Endothelial cell of umbilical vein (primary cell): ENCODE measurements at regions of chr10 and their contacts with region 1.

Region 1: DNA sequence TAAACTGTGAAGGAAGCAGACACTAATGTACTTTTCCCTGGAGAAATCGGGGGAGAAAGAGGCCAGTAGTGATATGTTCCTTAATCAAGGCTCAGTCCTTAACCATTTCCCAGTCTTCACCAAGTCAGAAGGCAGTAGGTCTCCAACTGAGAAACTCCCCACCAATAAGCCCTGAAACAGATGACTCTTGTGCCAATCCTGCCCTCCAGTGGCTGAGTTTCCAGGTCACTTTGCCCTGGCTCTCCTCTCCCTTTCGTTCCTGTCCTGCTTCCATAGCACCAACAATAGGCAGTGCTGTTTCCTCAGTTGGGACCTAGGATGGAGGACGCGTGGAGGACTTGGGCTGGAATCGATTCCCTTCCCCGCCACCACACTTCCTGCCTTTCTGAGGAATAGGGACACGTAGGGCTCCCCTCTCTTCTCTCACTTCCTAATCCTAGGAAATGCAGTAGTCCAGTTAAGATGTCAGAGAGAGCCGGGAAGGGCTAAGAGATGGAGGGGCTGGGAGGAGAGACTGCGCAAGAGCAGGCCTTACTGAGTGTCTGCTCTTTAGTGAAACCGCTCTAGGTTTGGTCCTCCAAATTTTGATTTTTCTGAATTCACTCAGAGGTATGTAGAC is 23.4 kb downstream of the ATOH7 start:
- DNase-seq: peak; percentile 82
- H3K4me3 ChIP-seq: no peak overlapping the region
- H3K27ac ChIP-seq: no peak overlapping the region
- H3K4me1 ChIP-seq: no peaks in the 10 kb centered on the region
- H3K27me3 ChIP-seq: peaks cover 5 to 10% of the 10 kb centered on the region in 2 experiments
- CTCF ChIP-seq: peak; percentile 70 to 75
- POLR2A ChIP-seq: no peak

Region 2: GRCh38 chr10:67849331-67850011 is 359.1 kb before region 1 on chr10:
- CTCF ChIA-PET with region 1: interaction called, 32 read pairs
- POLR2A ChIA-PET with region 1: no interaction called
- dilution Hi-C with region 1: no loop called
- intact Hi-C with region 1: no loop called
- DNase-seq: peak; percentile 92
- H3K4me3 ChIP-seq: peak overlapping the region; percentile 66 to 88 (median 74)
- H3K27ac ChIP-seq: peak overlapping the region; percentile 74
- H3K4me1 ChIP-seq: peaks cover 3% of the 10 kb centered on the region
- H3K27me3 ChIP-seq: no peaks in the 10 kb centered on the region
- CTCF ChIP-seq: no peak
- POLR2A ChIP-seq: peak; percentile 61

Region 3: GRCh38 chr10:68156373-68157185 is 52.0 kb before region 1 on chr10:
- CTCF ChIA-PET with region 1: interaction called, 25 read pairs
- POLR2A ChIA-PET with region 1: no interaction called
- dilution Hi-C with region 1: no loop called
- intact Hi-C with region 1: loop called (anchors 1 kb)
- DNase-seq: peak; percentile 74
- H3K4me3 ChIP-seq: no peak overlapping the region
- H3K27ac ChIP-seq: no peak overlapping the region
- H3K4me1 ChIP-seq: peaks cover 14% of the 10 kb centered on the region
- H3K27me3 ChIP-seq: no peaks in the 10 kb centered on the region
- CTCF ChIP-seq: peak; percentile 66 to 71
- POLR2A ChIP-seq: no peak

Region 4: GRCh38 chr10:68223535-68224165 is 15.1 kb after region 1 on chr10:
- CTCF ChIA-PET with region 1: interaction called, 38 read pairs
- POLR2A ChIA-PET with region 1: no interaction called
- dilution Hi-C with region 1: no loop called
- intact Hi-C with region 1: no loop called
- DNase-seq: no peak
- H3K4me3 ChIP-seq: no peak overlapping the region
- H3K27ac ChIP-seq: no peak overlapping the region
- H3K4me1 ChIP-seq: no peaks in the 10 kb centered on the region
- H3K27me3 ChIP-seq: peaks cover 3 to 5% of the 10 kb centered on the region in 2 experiments
- CTCF ChIP-seq: no peak
- POLR2A ChIP-seq: no peak

Region 5: DNA sequence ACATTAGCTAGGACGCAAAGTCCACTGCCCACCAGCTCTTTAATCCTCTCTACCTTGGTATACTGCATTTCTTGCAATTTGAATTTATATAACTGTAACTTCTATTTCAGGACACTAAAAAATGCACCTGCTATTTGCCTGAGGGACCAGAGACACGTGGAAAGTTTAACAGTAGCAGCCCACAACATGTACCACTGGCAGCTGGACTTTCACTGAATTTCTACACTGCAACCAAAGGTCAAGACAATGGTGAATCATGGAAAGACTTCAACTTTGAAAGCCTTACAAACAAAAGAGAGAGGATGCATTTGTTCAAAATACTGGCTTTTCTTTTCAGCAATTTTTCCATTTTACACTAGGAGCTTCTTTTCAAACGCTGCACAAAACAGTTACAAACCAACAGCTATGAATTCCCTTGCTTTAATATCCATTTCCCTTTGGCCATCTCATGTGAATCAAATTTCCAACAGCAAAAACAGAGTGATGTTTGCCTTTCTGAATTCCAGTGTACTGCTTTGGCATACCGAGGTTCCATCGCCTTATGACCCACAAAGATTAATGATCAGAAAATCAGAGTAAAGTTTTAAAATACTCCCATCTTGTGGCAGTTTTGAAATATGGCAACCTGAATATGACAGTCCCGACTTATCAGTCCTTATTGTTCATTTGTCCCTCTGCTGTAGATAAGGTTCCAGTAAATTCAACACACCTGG is 93.4 kb after region 1 on chr10:
- CTCF ChIA-PET with region 1: interaction called, 290 read pairs
- POLR2A ChIA-PET with region 1: no interaction called
- dilution Hi-C with region 1: no loop called
- intact Hi-C with region 1: loop called (anchors 1 kb)
- DNase-seq: peak; percentile 63
- H3K4me3 ChIP-seq: no peak overlapping the region
- H3K27ac ChIP-seq: no peak overlapping the region
- H3K4me1 ChIP-seq: peaks cover 3% of the 10 kb centered on the region
- H3K27me3 ChIP-seq: no peaks in the 10 kb centered on the region
- CTCF ChIP-seq: peak; percentile 26 to 36
- POLR2A ChIP-seq: no peak

Region 6: GRCh38 chr10:68901104-68901927 is 692.8 kb after region 1 on chr10 and contains the start of gene DDX50:
- CTCF ChIA-PET with region 1: interaction called, 12 read pairs
- POLR2A ChIA-PET with region 1: no interaction called
- dilution Hi-C with region 1: no loop called
- intact Hi-C with region 1: loop called (anchors 2 kb)
- DNase-seq: peak; percentile 99
- H3K4me3 ChIP-seq: peak within 1 kb of the TSS; percentile 62 to 92 (median 79)
- H3K27ac ChIP-seq: peak within 1 kb of the TSS; percentile 94
- H3K4me1 ChIP-seq: peaks cover 14% of the 10 kb centered on the region
- H3K27me3 ChIP-seq: no peaks in the 10 kb centered on the region
- CTCF ChIP-seq: peak in 1 of 2 donors; percentile 14
- POLR2A ChIP-seq: peak; percentile 91
- total RNA-seq, gene DDX50: 25.9 and 28.2 TPM in 2 replicates

Region 7: GRCh38 chr10:69087590-69088470 is 879.3 kb after region 1 on chr10 and contains the start of gene SRGN:
- CTCF ChIA-PET with region 1: no interaction called
- POLR2A ChIA-PET with region 1: no interaction called
- dilution Hi-C with region 1: no loop called
- intact Hi-C with region 1: no loop called
- DNase-seq: peak; percentile 92
- H3K4me3 ChIP-seq: peak within 1 kb of the TSS; percentile 74 to 95 (median 88)
- H3K27ac ChIP-seq: peak within 1 kb of the TSS; percentile 96
- H3K4me1 ChIP-seq: peaks cover 46% of the 10 kb centered on the region
- H3K27me3 ChIP-seq: no peaks in the 10 kb centered on the region
- CTCF ChIP-seq: no peak
- POLR2A ChIP-seq: peak; percentile 93
- total RNA-seq, gene SRGN: 433 and 450 TPM in 2 replicates